Prostate gland (tissue), 2 donors: ENCODE measurements at regions of chr9 and their contacts with region 1.

Region 1: GRCh38 chr9:4297151-4297785 is 2.6 kb downstream of the GLIS3 start:
- DNase-seq: peak; percentile 66
- H3K4me3 ChIP-seq: peak overlapping the region; percentile 67
- H3K27ac ChIP-seq: peak overlapping the region; percentile 83 to 89
- H3K4me1 ChIP-seq: no peaks in the 10 kb centered on the region
- H3K27me3 ChIP-seq: no peaks in the 10 kb centered on the region
- CTCF ChIP-seq: peak in 2 of 4 experiments; percentile 32 to 40
- POLR2A ChIP-seq: peak; percentile 20

Region 2: DNA sequence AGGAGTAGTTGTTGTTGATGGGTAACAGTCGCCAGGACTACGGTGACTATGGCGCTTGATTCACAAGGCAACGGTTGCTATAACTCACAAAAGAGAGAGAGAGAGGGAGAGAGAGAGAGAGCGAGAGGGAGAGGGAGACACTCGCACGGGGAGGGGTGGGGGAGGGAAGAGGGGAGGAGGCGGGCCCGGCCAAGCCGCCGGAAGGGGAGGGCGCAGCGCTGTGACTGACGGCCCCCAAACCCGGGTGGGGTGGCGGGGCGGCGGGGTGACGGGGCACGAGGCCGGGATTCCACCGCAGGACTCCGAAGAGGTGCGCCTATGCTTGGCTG is 771.5 kb before region 1 on chr9 and contains the start of gene RFX3:
- intact Hi-C with region 1: loop called (anchors 5 kb)
- DNase-seq: peak; percentile 89
- H3K4me3 ChIP-seq: peak within 1 kb of the TSS; percentile 71 to 93
- H3K27ac ChIP-seq: peak within 1 kb of the TSS; percentile 100
- H3K4me1 ChIP-seq: peaks cover 2% of the 10 kb centered on the region
- H3K27me3 ChIP-seq: no peaks in the 10 kb centered on the region
- CTCF ChIP-seq: no peak
- POLR2A ChIP-seq: no peak
- total RNA-seq, gene RFX3: 10.9 to 15.5 TPM

Region 3: GRCh38 chr9:3954331-3955304 is 342.6 kb before region 1 on chr9:
- intact Hi-C with region 1: loop called (anchors 10 kb)
- DNase-seq: no peak
- H3K4me3 ChIP-seq: no peak overlapping the region
- H3K27ac ChIP-seq: no peak overlapping the region
- H3K4me1 ChIP-seq: no peaks in the 10 kb centered on the region
- H3K27me3 ChIP-seq: no peaks in the 10 kb centered on the region
- CTCF ChIP-seq: no peak
- POLR2A ChIP-seq: no peak

Region 4: GRCh38 chr9:4077499-4078102 is 219.7 kb before region 1 on chr9:
- intact Hi-C with region 1: loop called (anchors 5 kb)
- DNase-seq: peak; percentile 36
- H3K4me3 ChIP-seq: no peak overlapping the region
- H3K27ac ChIP-seq: no peak overlapping the region
- H3K4me1 ChIP-seq: no peaks in the 10 kb centered on the region
- H3K27me3 ChIP-seq: no peaks in the 10 kb centered on the region
- CTCF ChIP-seq: peak in 3 of 4 experiments; percentile 31 to 49 (median 41)
- POLR2A ChIP-seq: no peak

Region 5: DNA sequence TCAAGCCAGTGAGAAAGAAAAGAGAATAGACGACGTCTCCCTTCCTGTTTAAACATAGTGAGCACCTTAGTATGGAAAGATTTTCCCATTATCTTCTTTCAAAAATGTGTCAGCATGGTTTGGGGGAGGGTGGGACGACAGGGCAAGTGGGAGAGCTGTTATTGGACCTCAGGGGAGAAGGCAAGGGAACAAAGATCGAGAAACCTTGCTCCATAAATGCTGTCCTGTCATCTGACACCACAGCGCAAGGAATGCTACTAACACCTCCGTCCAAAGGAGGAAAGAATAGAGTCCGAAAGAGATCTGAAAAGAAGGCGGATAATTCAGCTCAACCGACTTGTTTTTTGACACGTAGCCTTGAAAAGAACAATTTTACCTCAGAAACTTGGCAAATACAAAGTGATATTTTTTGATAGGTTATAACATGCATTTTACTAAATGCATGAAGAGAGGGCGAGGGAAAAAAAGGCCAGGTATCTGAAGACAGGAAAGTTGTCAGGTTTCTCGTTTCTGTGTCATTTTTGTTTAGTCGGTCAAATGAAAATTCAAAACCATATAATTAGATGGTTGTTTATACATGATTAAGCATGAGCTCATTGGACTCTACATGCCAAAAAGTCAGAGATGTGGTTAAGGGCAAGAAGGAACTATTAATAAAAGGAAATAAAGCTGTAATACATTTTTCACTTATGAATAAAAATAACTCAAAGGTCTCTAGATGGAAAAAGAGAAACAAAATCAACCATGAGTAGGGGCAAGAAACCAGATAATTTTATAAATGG is 153.1 kb before region 1 on chr9:
- intact Hi-C with region 1: loop called (anchors 10 kb)
- DNase-seq: no peak
- H3K4me3 ChIP-seq: peak overlapping the region in 1 of 2 donors; percentile 24
- H3K27ac ChIP-seq: peak overlapping the region; percentile 42 to 75
- H3K4me1 ChIP-seq: no peaks in the 10 kb centered on the region
- H3K27me3 ChIP-seq: no peaks in the 10 kb centered on the region
- CTCF ChIP-seq: no peak
- POLR2A ChIP-seq: no peak

Region 6: DNA sequence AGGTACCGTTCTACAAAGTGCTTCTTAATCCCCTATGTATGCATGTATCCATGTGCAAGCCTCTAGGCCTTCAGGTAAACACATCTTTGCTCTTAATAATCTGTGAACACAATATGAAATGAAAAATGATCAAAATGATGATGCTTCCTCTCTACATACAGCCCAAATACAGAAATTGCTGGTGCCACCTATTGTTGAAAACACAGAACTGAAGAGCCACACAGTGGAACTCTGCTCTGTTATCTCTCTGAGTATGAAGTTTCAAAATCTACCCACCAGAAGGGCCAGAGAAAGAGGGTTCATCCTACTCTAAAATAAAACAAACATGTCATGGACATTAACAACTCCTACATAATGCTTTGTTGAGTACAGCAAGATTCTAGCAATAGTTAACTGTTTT is 68.7 kb before region 1 on chr9:
- intact Hi-C with region 1: loop called (anchors 5 kb)
- DNase-seq: no peak
- H3K4me3 ChIP-seq: no peak overlapping the region
- H3K27ac ChIP-seq: no peak overlapping the region
- H3K4me1 ChIP-seq: no peaks in the 10 kb centered on the region
- H3K27me3 ChIP-seq: no peaks in the 10 kb centered on the region
- CTCF ChIP-seq: peak in 3 of 4 experiments; percentile 22 to 56 (median 41)
- POLR2A ChIP-seq: no peak

Region 7: GRCh38 chr9:4375424-4376200 is 78.3 kb after region 1 on chr9:
- intact Hi-C with region 1: no loop called
- DNase-seq: peak; percentile 7
- H3K4me3 ChIP-seq: no peak overlapping the region
- H3K27ac ChIP-seq: peak overlapping the region in 1 of 2 donors; percentile 7
- H3K4me1 ChIP-seq: no peaks in the 10 kb centered on the region
- H3K27me3 ChIP-seq: no peaks in the 10 kb centered on the region
- CTCF ChIP-seq: peak in 3 of 4 experiments; percentile 54 to 71 (median 61)
- POLR2A ChIP-seq: no peak